Heart right ventricle (tissue), 16 donors: ENCODE measurements at regions of chr11 and their contacts with region 1.

Region 1: DNA sequence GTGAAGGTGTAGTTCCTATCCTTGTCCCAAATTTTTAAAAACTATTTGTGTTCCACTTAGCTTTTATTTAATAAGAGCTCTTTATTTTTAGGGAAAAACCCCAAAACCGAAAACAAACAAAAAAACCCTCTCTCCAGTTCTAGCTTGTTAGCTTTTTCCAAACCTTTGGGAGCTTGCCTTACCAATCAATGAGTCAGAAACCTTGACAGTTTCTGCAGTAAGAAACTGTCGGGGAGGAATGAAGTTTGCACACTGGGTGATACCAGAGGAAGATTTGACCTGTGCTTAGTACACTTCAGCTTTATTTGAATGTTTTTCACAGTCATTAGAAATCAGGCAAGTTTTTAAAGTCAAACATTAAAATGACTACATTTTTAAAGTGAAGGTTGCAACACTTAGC is 105.0 kb downstream of the FAT3 start:
- DNase-seq: no peak
- ATAC-seq: no peak
- H3K4me3 ChIP-seq: no peak overlapping the region
- H3K27ac ChIP-seq: no peak overlapping the region
- H3K4me1 ChIP-seq: no peaks in the 10 kb centered on the region
- H3K27me3 ChIP-seq: peaks cover 0 to 6% (median 0%) of the 10 kb centered on the region in 7 donors
- CTCF ChIP-seq: no peak

Region 2: GRCh38 chr11:92457250-92457649 is 127.6 kb after region 1 on chr11:
- intact Hi-C with region 1: loop called in 1 of 10 experiments (anchors 5 kb)
- DNase-seq: no peak
- ATAC-seq: no peak
- H3K4me3 ChIP-seq: no peak overlapping the region
- H3K27ac ChIP-seq: no peak overlapping the region
- H3K4me1 ChIP-seq: no peaks in the 10 kb centered on the region
- H3K27me3 ChIP-seq: no peaks in the 10 kb centered on the region
- CTCF ChIP-seq: no peak